ENCODE measurements at regions of chr20 and their contacts with region 1.

Region 1: GRCh38 chr20:63537525-63538203 is 488 bp upstream of the PTK6 start:
- DNase-seq: peak; percentile 90 to 94 (median 92)
- ATAC-seq: peak; percentile 95
- H3K4me3 ChIP-seq: no peak overlapping the region
- H3K27ac ChIP-seq: no peak overlapping the region
- H3K4me1 ChIP-seq: peaks cover 6 to 90% of the 10 kb centered on the region in 2 experiments; a peak in 4 of 5 replicates
- H3K27me3 ChIP-seq: peaks cover 0 to 26% of the 10 kb centered on the region in 2 experiments; a peak in 2 of 5 replicates
- CTCF ChIP-seq: peak; percentile 89 to 95 (median 92)
- EP300 ChIP-seq: no peak
- POLR2A ChIP-seq: no peak
- RAD21 ChIP-seq: peak; percentile 94 to 97

Region 2: DNA sequence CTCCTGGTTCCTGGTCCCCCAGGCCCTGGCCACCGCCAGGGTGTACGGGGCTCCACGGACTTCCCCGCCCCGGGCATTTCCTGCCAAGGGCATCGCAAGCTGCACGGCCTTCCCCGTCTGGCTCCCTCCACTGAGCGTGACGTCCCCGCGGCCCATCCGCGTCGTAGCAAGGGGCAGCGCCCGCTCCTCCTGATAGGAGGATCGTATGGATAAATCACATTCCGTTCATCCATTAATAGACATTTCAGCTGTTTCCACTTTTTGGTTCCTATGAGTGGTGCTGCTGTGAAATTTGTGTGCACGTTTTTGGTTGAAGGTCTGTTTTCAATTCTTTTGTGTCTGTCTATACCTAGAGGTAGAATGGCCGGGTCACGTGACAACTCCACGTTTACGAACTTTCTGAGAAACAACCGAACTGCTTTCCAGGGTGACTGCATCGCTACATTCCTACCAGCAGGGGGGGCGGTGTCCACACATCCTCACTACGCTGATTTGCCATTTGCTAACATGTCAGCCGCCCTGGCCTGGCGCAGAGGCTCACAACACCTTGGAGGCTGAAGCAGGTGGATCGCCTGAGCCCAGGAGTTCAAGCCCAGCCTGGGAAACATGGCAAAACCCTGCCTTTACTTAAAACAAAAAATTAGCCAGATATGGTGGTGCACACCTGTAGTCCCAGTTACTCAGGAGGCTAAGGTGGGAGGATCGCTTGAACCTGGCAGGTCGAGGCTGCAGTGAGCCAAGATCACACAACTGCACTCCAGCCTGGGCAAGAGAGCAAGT is 102.9 kb before region 1 on chr20:
- CTCF ChIA-PET with region 1: no interaction called
- POLR2A ChIA-PET with region 1: no interaction called
- in situ Hi-C with region 1: no loop called
- intact Hi-C with region 1: no loop called
- DNase-seq: peak; percentile 77 to 83 (median 83)
- ATAC-seq: peak; percentile 89
- H3K4me3 ChIP-seq: no peak overlapping the region
- H3K27ac ChIP-seq: no peak overlapping the region
- H3K4me1 ChIP-seq: peaks cover 0 to 20% of the 10 kb centered on the region in 2 experiments; a peak in 2 of 5 replicates
- H3K27me3 ChIP-seq: peaks cover 11 to 36% of the 10 kb centered on the region in 2 experiments
- CTCF ChIP-seq: peak; percentile 71 to 92 (median 76)
- EP300 ChIP-seq: no peak
- POLR2A ChIP-seq: no peak
- RAD21 ChIP-seq: peak in 1 of 2 experiments; percentile 54; a peak in 2 of 4 replicates

Region 3: GRCh38 chr20:63520504-63520933 is 17.1 kb before region 1 on chr20 and contains the start of gene PPDPF:
- CTCF ChIA-PET with region 1: no interaction called
- POLR2A ChIA-PET with region 1: interaction called, 27 read pairs
- in situ Hi-C with region 1: no loop called
- intact Hi-C with region 1: no loop called
- DNase-seq: peak; percentile 84 to 99 (median 97)
- ATAC-seq: peak; percentile 73
- H3K4me3 ChIP-seq: peak within 1 kb of the TSS; percentile 85
- H3K27ac ChIP-seq: peak within 1 kb of the TSS; percentile 96
- H3K4me1 ChIP-seq: peaks cover 10 to 57% of the 10 kb centered on the region in 2 experiments
- H3K27me3 ChIP-seq: peaks cover 24 to 34% of the 10 kb centered on the region in 2 experiments
- CTCF ChIP-seq: no peak
- EP300 ChIP-seq: no peak
- POLR2A ChIP-seq: peak; percentile 76
- RAD21 ChIP-seq: no peak
- polyA plus RNA-seq, gene PPDPF: 0.77 to 0.85 TPM

Region 4: DNA sequence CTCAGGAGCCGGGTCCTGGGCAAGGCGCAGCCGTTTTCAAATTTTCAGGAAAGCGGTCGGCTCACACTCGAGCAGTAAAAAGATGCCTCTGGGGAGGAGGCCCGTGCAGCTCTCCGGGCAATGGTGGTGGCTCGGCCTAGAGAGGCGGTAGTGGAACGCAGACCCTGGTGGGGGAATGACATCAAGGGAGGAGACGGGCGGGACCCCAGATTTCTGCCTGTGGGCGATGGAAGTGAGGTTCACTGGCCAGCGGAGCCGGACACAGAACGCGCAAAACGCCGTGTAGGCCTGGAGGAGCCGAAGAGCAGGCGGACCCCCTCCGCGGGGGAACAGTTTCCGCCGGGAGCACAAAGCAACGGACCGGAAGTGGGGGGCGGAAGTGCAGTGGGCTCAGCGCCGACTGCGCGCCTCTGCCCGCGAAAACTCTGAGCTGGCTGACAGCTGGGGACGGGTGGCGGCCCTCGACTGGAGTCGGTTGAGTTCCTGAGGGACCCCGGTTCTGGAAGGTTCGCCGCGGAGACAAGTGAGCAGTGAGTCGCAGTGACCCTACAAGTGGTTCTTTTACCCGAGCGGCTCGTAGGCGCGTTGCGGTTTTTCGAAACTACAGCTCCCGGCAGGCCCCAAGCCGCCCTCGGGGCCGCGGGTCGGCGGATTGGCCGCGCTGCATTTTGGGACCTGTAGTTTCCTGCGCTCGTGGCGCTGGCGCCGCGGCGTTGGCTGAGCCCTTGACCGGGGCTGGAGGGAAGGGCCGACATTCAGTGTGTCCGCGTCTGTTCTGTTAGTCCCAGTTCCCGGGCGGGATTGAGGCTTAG is 120.5 kb after region 1 on chr20 and contains the start of gene RTEL1:
- CTCF ChIA-PET with region 1: no interaction called
- POLR2A ChIA-PET with region 1: no interaction called
- in situ Hi-C with region 1: no loop called
- intact Hi-C with region 1: loop called (anchors 10 kb)
- DNase-seq: peak; percentile 85 to 95 (median 89)
- ATAC-seq: peak; percentile 93
- H3K4me3 ChIP-seq: peak within 1 kb of the TSS; percentile 63
- H3K27ac ChIP-seq: peak within 1 kb of the TSS; percentile 87
- H3K4me1 ChIP-seq: peaks cover 28 to 55% of the 10 kb centered on the region in 2 experiments
- H3K27me3 ChIP-seq: no peaks in the 10 kb centered on the region
- CTCF ChIP-seq: no peak
- EP300 ChIP-seq: 0 out of 2 replicates have a peak, but pooled peaks have one; percentile 13
- POLR2A ChIP-seq: peak; percentile 83
- RAD21 ChIP-seq: no peak; a peak in 1 of 4 replicates
- polyA plus RNA-seq, gene RTEL1: 0.36 to 0.45 TPM

Region 5: DNA sequence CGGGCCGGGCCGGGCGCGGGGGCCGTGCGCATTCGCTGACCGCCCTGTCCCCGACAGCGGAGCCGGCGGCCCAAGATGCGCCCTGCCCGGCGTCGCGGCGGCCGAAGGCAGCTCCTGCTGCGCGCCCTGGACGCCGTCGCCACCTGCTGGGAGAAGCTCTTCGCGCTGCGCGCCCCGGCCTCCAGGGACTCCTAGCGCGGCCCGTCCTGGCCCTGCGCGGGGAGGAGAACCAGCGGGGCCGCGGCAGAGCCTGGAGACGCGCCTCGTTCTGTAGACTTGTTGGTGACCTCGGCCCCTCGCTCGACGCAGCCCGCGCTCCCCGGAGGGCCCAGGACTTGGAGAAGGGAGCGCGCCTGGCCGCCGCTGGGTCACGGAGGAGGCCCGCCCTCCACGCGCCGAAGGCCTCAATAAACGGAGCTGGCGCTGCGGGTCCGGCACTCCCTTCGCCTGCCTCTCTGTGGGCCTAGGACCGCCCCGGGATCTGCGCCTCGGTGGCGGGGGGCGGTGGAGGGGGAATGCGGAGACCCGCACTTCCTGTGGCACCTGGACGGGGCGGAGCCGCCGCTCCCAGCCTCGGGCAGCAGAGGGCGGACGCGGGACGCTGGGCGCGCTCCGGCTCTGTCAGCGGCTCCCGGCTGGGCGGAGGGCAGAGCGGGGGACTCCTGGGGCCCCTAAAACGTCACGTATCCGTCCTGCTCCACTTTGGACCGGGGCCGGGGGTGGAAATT is 501.1 kb after region 1 on chr20:
- CTCF ChIA-PET with region 1: interaction called, 4 read pairs
- POLR2A ChIA-PET with region 1: no interaction called
- in situ Hi-C with region 1: no loop called
- intact Hi-C with region 1: loop called (anchors 5 kb)
- DNase-seq: peak; percentile 84 to 89 (median 86)
- ATAC-seq: peak; percentile 86
- H3K4me3 ChIP-seq: peak overlapping the region; percentile 51
- H3K27ac ChIP-seq: peak overlapping the region; percentile 83
- H3K4me1 ChIP-seq: peaks cover 33 to 85% of the 10 kb centered on the region in 2 experiments
- H3K27me3 ChIP-seq: no peaks in the 10 kb centered on the region
- CTCF ChIP-seq: peak; percentile 63 to 97 (median 86)
- EP300 ChIP-seq: no peak
- POLR2A ChIP-seq: peak; percentile 37; the same call in 1 of the 2 replicates
- RAD21 ChIP-seq: peak; percentile 60 to 73